ENCODE measurements at regions of chr5 and their contacts with region 1.

Region 1: DNA sequence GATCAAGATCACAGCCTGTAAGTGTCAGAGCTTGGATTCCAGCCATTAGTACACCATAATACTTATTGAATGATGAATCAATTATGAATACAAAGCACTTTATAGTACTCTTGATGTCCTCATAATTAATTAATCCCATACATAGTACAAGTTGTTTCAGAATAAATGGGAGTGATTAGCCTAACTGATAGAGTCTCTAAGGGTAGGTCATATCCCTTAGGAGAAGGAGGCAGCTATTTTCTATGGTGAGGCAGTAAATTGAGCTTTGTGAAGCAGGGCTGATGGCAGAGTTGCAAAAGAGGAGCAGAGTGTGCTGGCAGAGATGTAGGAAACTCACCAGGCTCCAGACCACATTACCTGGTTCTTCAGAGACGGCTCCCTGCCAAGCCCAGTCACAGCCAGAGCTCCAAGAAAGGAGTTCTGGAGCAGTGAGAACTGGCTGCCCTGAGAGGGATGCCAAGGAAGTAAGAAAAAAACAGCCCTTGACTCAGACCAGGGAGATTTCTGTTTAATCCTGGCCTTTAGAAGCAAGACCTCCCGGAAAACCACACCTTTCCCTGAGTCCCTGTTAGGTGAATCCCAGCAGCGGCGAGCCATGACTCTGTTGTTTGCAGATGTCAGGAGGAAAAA is 112.9 kb downstream of the SH3TC2 start:
- DNase-seq: peak; percentile 93 to 96
- ATAC-seq: peak; percentile 92 to 96
- H3K4me3 ChIP-seq: peak overlapping the region; percentile 11 to 31 (median 15)
- H3K27ac ChIP-seq: peak overlapping the region; percentile 94 to 98 (median 96)
- H3K4me1 ChIP-seq: peaks cover 23 to 29% of the 10 kb centered on the region in 2 donors
- H3K27me3 ChIP-seq: no peaks in the 10 kb centered on the region
- CTCF ChIP-seq: no peak
- POLR2A ChIP-seq: peak in 1 of 2 donors; percentile 17

Region 2: GRCh38 chr5:148848393-148849031 is 101.4 kb before region 1 on chr5:
- in situ Hi-C with region 1: no loop called
- intact Hi-C with region 1: no loop called
- DNase-seq: no peak
- ATAC-seq: no peak
- H3K4me3 ChIP-seq: no peak overlapping the region
- H3K27ac ChIP-seq: peak overlapping the region in 1 of 4 donors; percentile 15
- H3K4me1 ChIP-seq: peaks cover 39 to 76% of the 10 kb centered on the region in 2 donors
- H3K27me3 ChIP-seq: no peaks in the 10 kb centered on the region
- CTCF ChIP-seq: no peak
- POLR2A ChIP-seq: no peak

Region 3: DNA sequence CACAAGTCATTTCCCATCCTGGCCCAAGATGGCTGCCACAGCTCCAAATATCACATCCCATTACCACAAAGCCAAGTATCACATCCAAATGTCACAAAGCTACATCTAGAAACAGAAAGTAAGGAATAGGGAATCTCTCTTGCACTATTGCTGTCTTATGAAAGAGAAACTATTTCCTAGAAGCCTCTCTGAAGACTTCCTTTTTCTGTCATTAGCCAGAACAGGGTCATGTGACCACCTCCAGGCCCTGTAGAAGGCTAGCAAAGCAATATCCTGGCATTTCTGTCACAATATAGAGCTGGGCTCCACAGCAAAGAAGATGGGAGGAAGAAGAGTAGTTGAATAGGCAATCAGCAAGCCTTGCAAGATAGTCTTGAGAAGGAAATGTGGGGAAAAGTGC is 13.7 kb after region 1 on chr5:
- in situ Hi-C with region 1: no loop called
- intact Hi-C with region 1: loop called (anchors 1 kb)
- DNase-seq: no peak
- ATAC-seq: no peak
- H3K4me3 ChIP-seq: no peak overlapping the region
- H3K27ac ChIP-seq: peak overlapping the region; percentile 90 to 96 (median 93)
- H3K4me1 ChIP-seq: peaks cover 24 to 41% of the 10 kb centered on the region in 2 donors
- H3K27me3 ChIP-seq: no peaks in the 10 kb centered on the region
- CTCF ChIP-seq: no peak
- POLR2A ChIP-seq: no peak

Measured in gastrocnemius medialis (tissue), 4 donors.